ENCODE measurements at regions of chr2 and their contacts with region 1.

Region 1: DNA sequence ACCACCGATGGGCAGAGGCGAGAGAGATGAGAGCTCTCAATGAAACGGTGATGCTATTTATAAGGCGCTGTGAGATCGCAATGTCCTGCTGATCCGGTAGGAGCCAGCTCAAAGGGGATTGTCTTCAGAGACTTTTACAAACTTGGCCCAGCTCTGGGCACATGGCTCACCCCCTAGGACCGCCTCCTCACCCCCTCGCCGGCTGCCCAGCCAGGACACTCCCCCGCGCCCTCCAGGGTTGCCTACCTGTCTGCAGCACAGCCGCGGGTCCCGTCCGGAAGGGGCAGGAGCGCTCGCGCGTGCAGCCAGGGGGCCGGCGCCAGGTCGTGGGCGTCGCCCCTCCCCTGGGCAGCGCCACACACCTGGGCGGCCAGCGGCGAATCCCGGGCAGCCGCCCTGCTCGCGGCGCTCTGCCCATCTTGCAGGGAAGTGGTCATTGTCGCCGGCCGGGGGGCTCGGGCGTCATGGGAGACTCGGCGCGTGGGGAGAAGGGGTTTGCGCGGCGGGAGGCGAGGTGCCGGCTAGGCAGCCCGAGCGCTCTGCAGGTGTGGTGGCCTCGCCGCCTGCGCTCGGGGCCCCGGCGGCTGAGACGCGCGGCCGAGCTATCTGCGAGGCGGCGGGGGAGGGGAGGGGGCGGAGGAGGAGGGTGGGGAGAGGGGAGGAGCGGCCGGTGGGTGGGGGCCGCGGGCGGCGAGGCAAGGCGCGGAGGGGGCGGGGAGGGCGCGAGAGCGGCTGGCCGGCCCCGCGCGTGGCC is at the start of gene GRB14:
- DNase-seq: peak; percentile 94
- H3K4me3 Mint-ChIP-seq: peak within 1 kb of the TSS; percentile 79
- H3K27ac Mint-ChIP-seq: peak within 1 kb of the TSS; percentile 43
- H3K4me1 Mint-ChIP-seq: peaks cover 20% of the 10 kb centered on the region
- H3K27me3 Mint-ChIP-seq: no peaks in the 10 kb centered on the region
- CTCF ChIP-seq: peak; percentile 11
- total RNA-seq, gene GRB14: 16.6 and 18.4 TPM in 2 replicates

Region 2: DNA sequence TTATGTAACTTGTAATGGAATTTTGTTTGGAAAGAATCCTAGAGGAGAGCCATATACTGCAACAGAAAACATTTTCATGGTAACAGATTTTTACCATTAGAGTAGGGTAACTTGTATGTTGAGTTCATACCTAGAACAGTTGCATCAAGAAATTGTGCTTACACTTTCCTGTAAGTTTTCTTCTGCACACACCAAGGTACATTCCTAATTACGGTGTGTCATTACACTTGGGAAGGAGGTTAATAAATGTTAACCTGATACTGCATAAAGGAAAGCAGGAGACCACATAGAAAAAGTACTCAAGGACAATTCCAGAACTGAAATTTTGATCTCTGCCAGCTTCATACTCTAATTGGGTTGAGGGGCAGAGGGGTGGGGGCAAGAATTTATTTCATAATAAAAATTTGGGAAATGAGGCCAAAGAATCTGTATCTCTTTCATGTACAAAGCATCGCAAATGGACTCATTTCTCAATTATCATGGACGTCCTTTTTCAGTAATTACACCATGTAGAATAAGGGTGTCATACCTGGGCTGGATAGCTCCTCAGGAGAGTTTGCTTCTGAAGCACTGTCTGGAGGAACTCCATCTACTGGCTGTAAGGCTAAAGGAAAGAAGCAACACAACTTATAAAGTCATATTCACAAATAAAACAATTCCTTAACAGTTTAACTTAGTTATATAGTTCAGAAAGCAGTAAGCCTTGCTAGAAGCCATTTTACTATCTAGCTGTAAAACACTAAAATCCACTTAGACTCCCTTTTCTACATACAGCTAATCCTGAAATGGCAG is 83.1 kb after region 1 on chr2:
- CTCF ChIA-PET with region 1: no interaction called
- intact Hi-C with region 1: loop called (anchors 5 kb)
- DNase-seq: no peak
- H3K4me3 Mint-ChIP-seq: no peak overlapping the region
- H3K27ac Mint-ChIP-seq: no peak overlapping the region
- H3K4me1 Mint-ChIP-seq: peaks cover 38% of the 10 kb centered on the region
- H3K27me3 Mint-ChIP-seq: no peaks in the 10 kb centered on the region
- CTCF ChIP-seq: no peak

Region 3: DNA sequence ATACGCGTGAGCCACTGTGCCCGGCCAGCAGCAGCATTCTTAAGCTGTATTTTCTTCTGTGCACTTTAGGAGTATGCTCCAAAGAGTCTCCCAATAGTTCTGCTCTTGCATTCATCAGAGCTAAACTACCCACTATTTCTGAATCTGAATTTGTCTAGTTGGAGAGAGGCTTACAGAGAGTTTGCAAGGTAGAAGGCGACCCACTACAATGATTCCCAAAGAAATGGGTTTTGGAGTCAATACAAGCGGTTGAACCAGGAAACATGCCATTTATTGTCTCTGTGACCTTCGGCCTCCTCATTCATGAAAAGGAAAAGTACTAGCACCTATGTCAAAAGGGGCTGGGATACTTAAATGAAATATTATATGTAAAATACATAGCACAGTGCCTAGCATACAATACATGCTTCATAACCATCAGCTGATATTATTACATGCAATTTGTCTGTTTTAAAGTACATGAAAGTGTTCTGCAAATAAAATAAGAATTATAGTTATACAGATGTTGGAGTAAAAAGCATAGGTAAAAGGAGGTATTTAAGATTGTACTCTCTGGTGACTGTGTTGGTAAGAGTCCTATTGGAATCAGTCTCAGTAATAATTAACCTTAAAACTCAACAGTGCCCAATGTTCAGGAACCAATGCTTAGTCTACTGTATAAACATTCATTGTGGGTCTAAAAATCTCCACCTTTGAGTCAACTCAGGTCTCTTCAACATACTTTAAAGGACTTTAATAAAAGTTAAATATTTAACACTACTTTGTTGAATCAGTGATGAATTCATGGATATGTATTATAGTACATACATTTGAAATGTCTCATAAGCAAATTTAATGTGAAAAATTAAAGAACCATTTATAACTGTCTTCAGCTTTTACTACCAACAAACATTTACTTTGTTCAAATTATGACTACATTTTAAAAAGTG is 90.1 kb after region 1 on chr2:
- CTCF ChIA-PET with region 1: no interaction called
- intact Hi-C with region 1: loop called (anchors 5 kb)
- DNase-seq: peak; percentile 12
- H3K4me3 Mint-ChIP-seq: peak overlapping the region; percentile 56
- H3K27ac Mint-ChIP-seq: peak overlapping the region; percentile 89
- H3K4me1 Mint-ChIP-seq: peaks cover 75% of the 10 kb centered on the region
- H3K27me3 Mint-ChIP-seq: no peaks in the 10 kb centered on the region
- CTCF ChIP-seq: no peak

Measured in Calu3 (cell line).